ENCODE measurements at regions of chr9 and their contacts with region 1.

Region 1: GRCh38 chr9:20022410-20022809 is 233.6 kb upstream of the SLC24A2 start:
- DNase-seq: no peak
- H3K4me3 ChIP-seq: no peak overlapping the region
- H3K4me3 Mint-ChIP-seq: no peak overlapping the region
- H3K27ac Mint-ChIP-seq: no peak overlapping the region
- H3K4me1 ChIP-seq: peaks cover 13% of the 10 kb centered on the region; the same call in 1 of the 2 replicates
- H3K4me1 Mint-ChIP-seq: peaks cover 8% of the 10 kb centered on the region
- H3K27me3 ChIP-seq: no peaks in the 10 kb centered on the region
- H3K27me3 Mint-ChIP-seq: no peaks in the 10 kb centered on the region
- CTCF ChIP-seq: no peak

Region 2: GRCh38 chr9:20197976-20198685 is 175.7 kb after region 1 on chr9:
- CTCF ChIA-PET with region 1: no interaction called
- POLR2A ChIA-PET with region 1: no interaction called
- intact Hi-C with region 1: loop called (anchors 10 kb)
- DNase-seq: peak; percentile 51 to 60
- H3K4me3 ChIP-seq: no peak overlapping the region
- H3K4me3 Mint-ChIP-seq: peak overlapping the region; percentile 42
- H3K27ac Mint-ChIP-seq: no peak overlapping the region
- H3K4me1 ChIP-seq: 0 out of 2 replicates have a peak, but pooled peaks cover 5% of the 10 kb centered on the region
- H3K4me1 Mint-ChIP-seq: peaks cover 12% of the 10 kb centered on the region
- H3K27me3 ChIP-seq: no peaks in the 10 kb centered on the region
- H3K27me3 Mint-ChIP-seq: no peaks in the 10 kb centered on the region
- CTCF ChIP-seq: peak in 1 of 2 experiments; percentile 22